Dendritic cell treated with granulocyte-macrophage colony-stimulating factor and Interleukin-4, amounts not matched to agents 40 ng/mL and 50 ng/mL, for 4 days (primary cell): ENCODE measurements at regions of chr7 and their contacts with region 1.

Region 1: GRCh38 chr7:94160719-94161435 is 156.7 kb upstream of the BET1 start:
- H3K4me3 Mint-ChIP-seq: peak overlapping the region; percentile 66
- H3K27ac Mint-ChIP-seq: peak overlapping the region; percentile 86
- H3K4me1 Mint-ChIP-seq: peaks cover 19% of the 10 kb centered on the region
- H3K27me3 Mint-ChIP-seq: peaks cover 2% of the 10 kb centered on the region

Region 2: GRCh38 chr7:93559639-93560491 is 601.0 kb before region 1 on chr7:
- intact Hi-C with region 1: loop called (anchors 10 kb)
- H3K4me3 Mint-ChIP-seq: peak overlapping the region; percentile 37
- H3K27ac Mint-ChIP-seq: peak overlapping the region; percentile 95
- H3K4me1 Mint-ChIP-seq: peaks cover 27% of the 10 kb centered on the region
- H3K27me3 Mint-ChIP-seq: peaks cover 2% of the 10 kb centered on the region

Region 3: DNA sequence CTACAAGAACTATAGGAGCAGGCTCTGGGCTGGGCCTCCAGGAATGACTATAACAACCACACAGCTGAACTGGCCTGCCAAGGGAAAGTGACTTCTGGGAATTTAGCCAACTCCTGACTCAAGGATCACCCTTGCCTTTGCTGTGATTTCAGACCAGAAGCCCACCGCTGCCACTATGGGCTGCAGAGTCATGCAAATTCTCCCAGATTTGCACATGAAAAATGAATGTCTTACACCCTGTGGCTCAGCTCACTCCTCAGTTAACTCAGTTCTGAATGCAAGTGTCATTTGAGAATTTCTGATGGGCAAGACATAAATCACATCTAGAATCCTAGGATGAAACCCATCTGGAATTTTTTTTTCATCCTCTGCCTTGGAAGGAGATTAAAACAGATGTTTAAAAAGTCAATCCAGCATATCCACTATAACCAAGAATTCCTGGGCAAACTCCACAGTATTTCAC is 29.8 kb after region 1 on chr7:
- intact Hi-C with region 1: no loop called
- H3K4me3 Mint-ChIP-seq: no peak overlapping the region
- H3K27ac Mint-ChIP-seq: no peak overlapping the region
- H3K4me1 Mint-ChIP-seq: no peaks in the 10 kb centered on the region
- H3K27me3 Mint-ChIP-seq: no peaks in the 10 kb centered on the region